Mammary epithelial cell (primary cell): ENCODE measurements at regions of chr19 and their contacts with region 1.

Region 1: DNA sequence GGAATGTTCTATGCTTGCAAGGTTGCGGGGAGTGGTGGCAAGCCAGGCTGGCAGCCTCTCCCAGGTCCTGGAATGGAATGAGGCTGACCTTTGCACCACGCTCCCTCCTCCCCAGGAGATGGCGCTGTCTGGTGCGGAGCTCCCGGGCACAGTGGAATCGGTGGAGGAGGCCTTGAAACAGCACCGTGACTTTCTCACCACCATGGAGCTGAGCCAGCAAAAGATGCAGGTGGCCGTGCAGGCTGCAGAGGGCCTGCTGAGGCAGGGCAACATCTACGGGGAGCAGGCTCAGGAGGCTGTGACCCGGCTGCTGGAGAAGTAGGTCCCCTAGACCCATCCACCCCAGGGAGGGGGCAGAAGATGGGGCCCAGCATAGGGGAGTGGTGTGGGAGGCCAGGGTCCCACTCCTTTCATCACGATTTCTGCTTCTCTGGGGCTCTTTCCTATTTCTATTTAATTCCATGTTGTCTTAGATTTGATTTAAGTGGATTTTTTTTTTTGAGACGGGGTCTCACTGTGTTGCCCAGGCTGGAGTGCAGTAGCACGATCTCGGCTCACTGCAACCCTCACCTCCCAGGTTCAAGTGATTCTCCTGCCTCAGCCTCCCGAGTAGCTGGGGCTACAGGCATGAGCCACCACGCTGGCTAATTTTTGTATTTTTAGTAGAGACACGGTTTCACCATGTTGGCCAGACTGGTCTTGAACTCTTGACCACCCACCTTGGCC is 53.2 kb upstream of the SHKBP1 start:
- DNase-seq: peak; percentile 42
- H3K4me3 ChIP-seq: no peak overlapping the region
- H3K27ac ChIP-seq: no peak overlapping the region
- H3K4me1 ChIP-seq: no peaks in the 10 kb centered on the region
- H3K27me3 ChIP-seq: no peaks in the 10 kb centered on the region
- CTCF ChIP-seq: peak; percentile 55 to 57

Region 2: GRCh38 chr19:40549007-40549708 is 25.7 kb after region 1 on chr19:
- CTCF ChIA-PET with region 1: no interaction called
- dilution Hi-C with region 1: no loop called
- in situ Hi-C with region 1: no loop called
- intact Hi-C with region 1: no loop called
- DNase-seq: peak; percentile 30
- H3K4me3 ChIP-seq: no peak overlapping the region
- H3K27ac ChIP-seq: no peak overlapping the region
- H3K4me1 ChIP-seq: peaks cover 2% of the 10 kb centered on the region
- H3K27me3 ChIP-seq: peaks cover 2% of the 10 kb centered on the region
- CTCF ChIP-seq: peak; percentile 20 to 66

Region 3: DNA sequence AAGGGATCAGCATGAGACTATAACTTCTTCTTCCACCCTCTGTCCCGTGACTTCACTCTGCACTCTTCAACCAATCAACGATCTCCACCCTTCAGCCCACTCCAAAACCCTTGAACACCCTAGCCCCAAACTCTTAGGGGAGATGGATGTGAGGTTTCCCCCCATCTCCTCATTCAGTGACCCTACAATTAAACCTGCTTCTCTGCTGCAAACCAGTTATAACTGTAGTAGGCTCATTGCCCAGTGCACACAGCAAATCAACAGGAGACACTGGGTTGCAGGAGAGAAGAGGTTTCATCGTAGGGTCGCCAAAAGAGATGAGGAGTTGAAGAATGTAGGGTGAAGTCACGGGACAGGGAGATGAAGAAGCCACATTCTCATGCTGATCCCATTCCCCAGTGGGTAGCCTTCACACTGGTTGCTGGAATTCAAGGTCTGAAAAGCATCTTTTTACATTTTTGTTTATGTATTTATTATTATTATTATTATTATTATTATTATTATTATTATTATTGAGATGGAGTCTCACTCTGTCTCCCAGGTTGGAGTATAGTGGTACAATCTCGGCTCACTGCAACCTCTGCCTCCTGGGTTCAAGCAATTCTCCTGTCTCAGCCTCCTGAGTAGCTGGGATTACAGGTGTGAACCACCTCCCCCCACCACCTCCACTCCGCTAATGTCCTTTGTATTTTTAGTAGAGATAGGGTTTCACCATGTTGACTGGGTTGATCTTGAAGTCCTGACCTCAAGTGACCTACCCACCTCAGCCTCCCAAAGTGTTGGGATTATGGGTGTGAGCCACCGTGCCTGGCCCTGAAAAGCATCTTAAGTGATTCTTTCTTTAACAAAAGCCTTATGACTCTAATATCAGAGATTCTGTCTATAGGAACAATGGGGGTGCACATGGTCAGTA is 663.7 kb after region 1 on chr19:
- CTCF ChIA-PET with region 1: interaction called, 11 read pairs
- dilution Hi-C with region 1: no loop called
- in situ Hi-C with region 1: no loop called
- intact Hi-C with region 1: no loop called
- DNase-seq: no peak
- H3K4me3 ChIP-seq: no peak overlapping the region
- H3K27ac ChIP-seq: no peak overlapping the region
- H3K4me1 ChIP-seq: no peaks in the 10 kb centered on the region
- H3K27me3 ChIP-seq: peaks cover 3% of the 10 kb centered on the region
- CTCF ChIP-seq: no peak